ENCODE measurements at regions of chr18 and their contacts with region 1.

Region 1: GRCh38 chr18:46445914-46446313 is 211.1 kb downstream of the LOXHD1 start:
- DNase-seq: no peak
- H3K4me3 ChIP-seq: no peak overlapping the region
- H3K27ac ChIP-seq: no peak overlapping the region
- H3K4me1 ChIP-seq: peaks cover 5 to 11% (median 7%) of the 10 kb centered on the region in 4 experiments
- H3K27me3 ChIP-seq: no peaks in the 10 kb centered on the region
- CTCF ChIP-seq: no peak
- EP300 ChIP-seq: no peak
- POLR2A ChIP-seq: no peak
- RAD21 ChIP-seq: peak in 1 of 2 experiments; percentile 28; a peak in 1 of 4 replicates

Region 2: DNA sequence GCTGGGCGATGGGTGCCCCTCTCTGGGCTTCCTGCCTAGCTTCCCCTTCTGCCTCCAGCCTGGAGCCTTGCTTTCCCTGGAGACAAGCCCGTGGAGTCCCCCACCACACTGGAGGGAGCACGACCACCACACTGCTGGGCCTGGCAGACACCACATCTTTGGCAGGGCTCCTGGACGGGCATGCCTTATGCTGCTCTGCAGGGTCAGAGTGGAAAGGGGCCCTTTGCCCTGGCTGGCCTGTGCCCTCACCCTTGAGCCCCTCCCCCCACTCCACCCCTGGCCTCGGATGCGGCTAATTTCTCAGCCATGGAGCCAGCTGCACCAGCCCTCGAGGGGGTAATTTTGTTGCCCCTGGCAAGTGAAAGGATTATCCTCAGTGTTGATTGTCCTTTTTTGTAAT is 16.6 kb after region 1 on chr18:
- CTCF ChIA-PET with region 1: interaction called, 30 read pairs
- POLR2A ChIA-PET with region 1: interaction called, 5 read pairs
- DNase-seq: no peak
- H3K4me3 ChIP-seq: no peak overlapping the region
- H3K27ac ChIP-seq: no peak overlapping the region
- H3K4me1 ChIP-seq: peaks cover 10 to 25% (median 17%) of the 10 kb centered on the region in 4 experiments
- H3K27me3 ChIP-seq: no peaks in the 10 kb centered on the region
- CTCF ChIP-seq: no peak
- EP300 ChIP-seq: no peak
- POLR2A ChIP-seq: no peak
- RAD21 ChIP-seq: no peak